Head of caudate nucleus (tissue), 42 donors: ENCODE measurements at regions of chr2 and their contacts with region 1.

Region 1: GRCh38 chr2:112726497-112727190 is 5.8 kb downstream of the NT5DC4 start:
- DNase-seq: peak; percentile 84 to 95 (median 91)

Region 2: DNA sequence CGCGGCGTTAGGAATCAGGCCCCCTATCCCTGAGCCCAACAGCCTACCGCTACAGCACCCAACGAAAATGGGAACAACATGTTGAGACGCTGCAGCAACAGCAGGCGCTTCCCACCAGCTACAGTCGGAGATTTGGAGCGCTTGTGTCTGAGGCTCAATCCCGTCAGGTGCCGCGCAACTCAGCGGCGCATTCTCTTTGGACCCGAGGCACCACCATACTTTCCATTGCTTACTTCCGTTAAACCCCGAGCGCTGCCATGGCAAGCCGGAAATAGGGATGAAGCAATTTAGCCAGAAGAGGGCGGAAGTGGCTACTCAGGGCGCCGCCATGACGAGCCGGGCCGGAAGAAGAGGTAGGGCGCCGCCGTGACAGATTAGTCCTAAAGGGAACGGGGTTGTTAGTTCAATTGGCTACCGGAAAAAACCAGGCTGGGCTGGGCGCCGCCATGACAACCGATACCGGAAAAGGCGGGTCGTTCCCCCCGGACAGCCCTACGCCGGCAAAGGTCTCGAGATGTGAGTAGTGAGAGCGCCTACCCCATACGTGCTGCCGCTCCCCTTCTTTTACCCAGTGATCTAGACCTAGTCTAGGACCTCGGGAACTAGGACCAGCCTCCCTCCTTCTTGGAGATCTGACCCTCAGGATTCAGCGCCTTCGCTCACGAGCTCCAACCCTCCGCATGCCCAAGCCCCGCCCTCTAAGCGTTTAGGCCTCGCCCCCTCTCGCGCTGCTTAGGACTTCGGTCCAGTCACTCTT is 142.3 kb before region 1 on chr2 and contains the start of gene CHCHD5:
- intact Hi-C with region 1: loop called (anchors 5 kb)
- DNase-seq: peak; percentile 90 to 98 (median 96)

Region 3: DNA sequence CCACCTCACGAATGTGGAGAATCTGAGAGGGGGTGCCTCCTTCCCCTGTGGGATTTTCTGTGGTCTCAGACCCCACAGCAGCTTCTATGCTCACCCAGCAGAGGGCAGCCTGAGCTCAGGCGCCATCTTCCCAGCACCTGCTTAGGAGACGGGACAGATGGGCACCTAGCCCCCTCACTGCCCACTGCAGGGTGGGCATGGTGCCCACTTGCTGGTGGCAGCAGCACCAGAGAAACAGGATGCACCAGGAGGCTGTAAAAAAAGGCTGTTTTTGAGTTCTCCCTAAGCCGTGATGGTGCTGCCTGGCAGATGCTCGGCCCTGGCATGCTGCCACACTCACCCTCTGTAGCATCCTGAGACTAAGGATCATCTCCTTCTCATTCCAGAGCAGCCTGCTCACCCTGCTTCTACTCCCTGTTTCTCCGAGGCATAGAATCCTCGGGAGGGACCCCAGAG is 100.0 kb before region 1 on chr2:
- intact Hi-C with region 1: loop called (anchors 10 kb)
- DNase-seq: peak; percentile 56 to 88 (median 75)